ENCODE measurements at regions of chr6 and their contacts with region 1.

Region 1: DNA sequence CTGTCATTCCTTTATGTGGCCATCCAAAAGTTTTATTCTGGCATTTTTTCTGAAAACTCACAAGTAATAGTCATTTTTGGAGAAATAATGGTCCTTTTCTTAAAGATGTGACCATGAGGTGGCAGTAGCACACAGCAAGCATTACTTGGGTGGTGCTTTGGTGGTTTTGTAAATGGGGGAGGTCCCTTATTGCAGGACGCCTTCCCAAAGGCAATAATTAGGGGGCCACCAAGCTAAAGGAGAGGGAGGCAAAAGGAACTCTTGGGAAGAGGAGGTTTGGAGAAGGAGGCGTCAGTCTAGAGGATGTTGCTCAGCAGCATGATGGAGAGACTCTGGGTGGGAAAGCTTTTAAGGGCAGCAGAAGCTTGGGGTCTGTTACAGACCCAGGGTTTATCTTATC is 422.6 kb upstream of the MMS22L start:
- DNase-seq: no peak
- H3K4me3 ChIP-seq: no peak overlapping the region
- H3K4me3 Mint-ChIP-seq: no peak overlapping the region
- H3K27ac Mint-ChIP-seq: no peak overlapping the region
- H3K4me1 ChIP-seq: no peaks in the 10 kb centered on the region
- H3K4me1 Mint-ChIP-seq: no peaks in the 10 kb centered on the region
- H3K27me3 ChIP-seq: no peaks in the 10 kb centered on the region
- H3K27me3 Mint-ChIP-seq: no peaks in the 10 kb centered on the region
- CTCF ChIP-seq: peak; percentile 43 to 53

Region 2: DNA sequence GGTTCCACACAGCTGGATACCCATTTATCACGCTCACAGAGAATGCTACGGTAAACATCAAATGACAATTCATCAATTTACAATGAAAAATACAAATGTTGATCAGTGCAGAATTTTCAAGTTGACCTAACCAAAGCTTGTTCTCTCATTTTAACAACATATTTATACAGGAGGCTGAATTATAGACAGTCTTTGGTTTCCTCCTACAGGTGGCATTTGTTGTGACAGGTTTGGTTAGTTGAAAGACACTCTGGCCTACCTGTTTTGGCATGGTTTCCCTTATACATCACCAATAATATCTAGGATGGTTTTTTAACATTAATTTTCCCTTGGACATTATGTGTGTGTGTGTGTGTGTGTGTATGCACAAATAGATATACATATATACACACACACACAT is 219.9 kb after region 1 on chr6:
- CTCF ChIA-PET with region 1: no interaction called
- POLR2A ChIA-PET with region 1: no interaction called
- intact Hi-C with region 1: loop called (anchors 1 kb)
- DNase-seq: no peak
- H3K4me3 ChIP-seq: no peak overlapping the region
- H3K4me3 Mint-ChIP-seq: no peak overlapping the region
- H3K27ac Mint-ChIP-seq: no peak overlapping the region
- H3K4me1 ChIP-seq: no peaks in the 10 kb centered on the region
- H3K4me1 Mint-ChIP-seq: no peaks in the 10 kb centered on the region
- H3K27me3 ChIP-seq: no peaks in the 10 kb centered on the region
- H3K27me3 Mint-ChIP-seq: no peaks in the 10 kb centered on the region
- CTCF ChIP-seq: peak; percentile 9 to 25

Region 3: DNA sequence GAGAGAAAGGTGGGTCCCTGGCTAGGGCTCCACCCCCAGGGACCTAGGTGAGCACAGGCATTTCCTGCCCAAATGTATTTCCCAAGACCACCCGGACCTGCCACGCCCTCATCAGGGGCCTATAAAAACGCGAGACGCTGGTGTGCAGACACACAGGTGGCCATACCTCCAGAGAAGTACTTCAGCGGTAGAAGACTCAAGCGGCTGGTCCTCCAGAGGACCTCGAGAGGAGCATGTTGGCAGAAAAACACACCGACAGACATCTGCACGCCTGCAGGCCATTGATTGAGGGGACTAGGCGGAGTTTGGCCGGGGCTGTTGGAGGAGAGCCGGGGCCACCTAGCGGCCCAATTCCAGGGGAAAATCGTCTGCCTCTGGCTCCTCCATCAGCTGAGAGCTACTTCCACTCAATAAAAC is 273.3 kb after region 1 on chr6:
- CTCF ChIA-PET with region 1: no interaction called
- POLR2A ChIA-PET with region 1: no interaction called
- intact Hi-C with region 1: loop called (anchors 1 kb)
- DNase-seq: peak; percentile 60 to 62
- H3K4me3 ChIP-seq: no peak overlapping the region
- H3K4me3 Mint-ChIP-seq: peak overlapping the region; percentile 52
- H3K27ac Mint-ChIP-seq: no peak overlapping the region
- H3K4me1 ChIP-seq: no peaks in the 10 kb centered on the region
- H3K4me1 Mint-ChIP-seq: no peaks in the 10 kb centered on the region
- H3K27me3 ChIP-seq: no peaks in the 10 kb centered on the region
- H3K27me3 Mint-ChIP-seq: peaks cover 2% of the 10 kb centered on the region
- CTCF ChIP-seq: peak; percentile 42 to 58

Region 4: GRCh38 chr6:98845211-98846020 is 1139.8 kb after region 1 on chr6:
- CTCF ChIA-PET with region 1: no interaction called
- POLR2A ChIA-PET with region 1: no interaction called
- intact Hi-C with region 1: loop called (anchors 5 kb)
- DNase-seq: peak; percentile 66 to 79
- H3K4me3 ChIP-seq: no peak overlapping the region
- H3K4me3 Mint-ChIP-seq: peak overlapping the region; percentile 56
- H3K27ac Mint-ChIP-seq: no peak overlapping the region
- H3K4me1 ChIP-seq: 0 out of 2 replicates have a peak, but pooled peaks cover 4% of the 10 kb centered on the region
- H3K4me1 Mint-ChIP-seq: no peaks in the 10 kb centered on the region
- H3K27me3 ChIP-seq: no peaks in the 10 kb centered on the region; the same call in 1 of the 2 replicates
- H3K27me3 Mint-ChIP-seq: peaks cover 34% of the 10 kb centered on the region
- CTCF ChIP-seq: peak; percentile 85 to 88